ENCODE measurements at regions of chr2 and their contacts with region 1.

Region 1: GRCh38 chr2:219177552-219178376 is at the start of gene RETREG2:
- DNase-seq: peak; percentile 87 to 93
- ATAC-seq: peak; percentile 77 to 87 (median 80)
- H3K4me3 ChIP-seq: peak within 1 kb of the TSS; percentile 100
- H3K27ac ChIP-seq: peak within 1 kb of the TSS; percentile 87
- H3K4me1 ChIP-seq: peaks cover 31% of the 10 kb centered on the region
- H3K27me3 ChIP-seq: no peaks in the 10 kb centered on the region
- CTCF ChIP-seq: peak; percentile 44
- total RNA-seq, gene RETREG2: 28.1 to 38.1 (median 37.1) TPM

Region 2: DNA sequence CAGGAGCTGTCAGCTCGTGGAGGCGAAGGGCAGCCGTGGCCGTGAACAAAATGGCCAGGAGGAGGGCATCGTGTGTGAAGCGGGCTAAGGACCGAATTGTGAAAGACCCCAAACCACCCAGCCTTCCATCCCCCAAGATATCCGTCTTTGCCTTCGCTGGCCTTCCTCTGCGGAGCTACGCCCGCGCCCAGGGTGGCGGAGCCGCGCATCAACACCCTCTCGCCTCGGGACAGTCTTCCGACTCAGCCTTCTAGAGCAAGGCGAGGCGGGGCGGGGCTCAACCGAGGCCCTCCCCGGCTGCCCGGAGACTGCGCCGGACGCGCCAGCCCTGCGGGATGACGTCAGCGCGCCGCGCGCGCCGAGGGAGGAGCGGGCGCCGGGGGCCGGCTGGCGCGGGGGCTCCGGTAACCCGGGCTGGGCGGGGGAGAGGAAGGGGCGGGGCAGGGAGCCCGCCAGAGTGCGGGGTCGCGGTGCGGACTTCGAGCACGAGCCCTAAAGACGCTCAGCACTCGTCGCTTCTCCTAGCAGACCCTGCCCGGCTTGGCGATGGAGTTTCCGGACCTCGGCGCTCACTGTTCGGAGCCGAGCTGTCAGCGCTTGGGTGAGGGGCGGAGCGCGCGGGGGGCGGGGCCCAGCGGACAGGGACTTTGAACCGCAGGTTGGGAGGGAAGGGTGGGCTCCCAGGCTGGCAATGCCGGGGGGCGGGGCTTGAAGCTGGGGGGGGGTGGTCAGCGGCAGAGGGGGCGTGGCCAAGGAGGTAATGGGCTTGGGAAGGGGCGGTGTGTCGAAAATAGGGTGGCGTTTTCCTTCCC is 28.9 kb after region 1 on chr2 and contains the start of gene ZFAND2B:
- intact Hi-C with region 1: loop called in 1 of 2 experiments (anchors 1 kb)
- DNase-seq: peak; percentile 95 to 97
- ATAC-seq: peak; percentile 97 to 98 (median 98)
- H3K4me3 ChIP-seq: peak within 1 kb of the TSS; percentile 75
- H3K27ac ChIP-seq: peak within 1 kb of the TSS; percentile 91
- H3K4me1 ChIP-seq: peaks cover 15% of the 10 kb centered on the region
- H3K27me3 ChIP-seq: no peaks in the 10 kb centered on the region
- CTCF ChIP-seq: peak; percentile 9
- total RNA-seq, gene ZFAND2B: 19.0 to 26.6 (median 22.1) TPM

Region 3: GRCh38 chr2:219218732-219219701 is 41.3 kb after region 1 on chr2 and contains the start of gene ABCB6:
- intact Hi-C with region 1: loop called in 1 of 2 experiments (anchors 5 kb)
- DNase-seq: peak; percentile 99
- ATAC-seq: peak; percentile 87 to 88 (median 87)
- H3K4me3 ChIP-seq: peak within 1 kb of the TSS; percentile 69
- H3K27ac ChIP-seq: peak within 1 kb of the TSS; percentile 92
- H3K4me1 ChIP-seq: peaks cover 24% of the 10 kb centered on the region
- H3K27me3 ChIP-seq: no peaks in the 10 kb centered on the region
- CTCF ChIP-seq: no peak
- total RNA-seq, gene ABCB6: 24.4 to 55.7 (median 43.5) TPM

Region 4: DNA sequence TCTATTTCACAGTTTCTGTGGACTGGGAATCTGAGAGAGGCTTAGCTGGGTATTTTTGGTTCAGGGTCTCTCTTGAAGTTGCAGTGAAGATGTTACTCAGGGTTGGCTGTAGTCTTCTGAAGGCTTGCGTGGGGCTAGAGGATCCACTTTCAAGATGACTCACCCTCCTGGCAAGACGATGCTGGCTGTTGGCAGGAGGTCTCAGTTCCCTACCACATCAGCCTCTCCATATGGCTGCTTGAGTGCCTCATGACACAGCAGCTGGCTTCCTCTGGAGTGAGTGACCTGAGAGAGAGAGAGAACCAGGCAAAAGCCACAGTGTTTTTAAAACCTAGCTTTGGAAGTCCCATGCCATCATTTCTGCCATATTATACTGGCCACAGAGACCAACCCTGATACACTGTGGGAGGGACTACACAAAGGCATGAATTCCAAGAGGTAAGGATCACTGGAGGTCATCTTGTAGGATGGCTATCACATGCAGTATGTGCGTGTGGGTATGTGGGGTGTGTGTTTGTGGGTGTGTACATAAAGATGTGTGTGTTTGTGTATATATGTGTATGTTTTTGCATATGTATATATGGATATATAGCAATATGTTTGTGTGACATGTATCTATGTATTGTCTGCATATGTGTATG is 184.9 kb after region 1 on chr2:
- intact Hi-C with region 1: loop called in 1 of 2 experiments (anchors 10 kb)
- DNase-seq: peak; percentile 78 to 90
- ATAC-seq: peak; percentile 97 to 99 (median 98)
- H3K4me3 ChIP-seq: no peak overlapping the region
- H3K27ac ChIP-seq: peak overlapping the region; percentile 76
- H3K4me1 ChIP-seq: peaks cover 25% of the 10 kb centered on the region
- H3K27me3 ChIP-seq: peaks cover 0 to 13% (median 5%) of the 10 kb centered on the region in 3 donors
- CTCF ChIP-seq: no peak

Region 5: GRCh38 chr2:219543601-219544358 is 366.0 kb after region 1 on chr2 and contains the starts of genes CHPF and TMEM198:
- intact Hi-C with region 1: loop called in 1 of 2 experiments (anchors 10 kb)
- DNase-seq: peak; percentile 98 to 99
- ATAC-seq: peak; percentile 91 to 93 (median 92)
- H3K4me3 ChIP-seq: peak within 1 kb of the TSS; percentile 79
- H3K27ac ChIP-seq: peak within 1 kb of the TSS; percentile 94
- H3K4me1 ChIP-seq: peaks cover 23% of the 10 kb centered on the region
- H3K27me3 ChIP-seq: no peaks in the 10 kb centered on the region
- CTCF ChIP-seq: no peak
- total RNA-seq, gene CHPF: 11.9 to 14.2 (median 13.1) TPM
- total RNA-seq, gene TMEM198: 0.88 to 3.1 (median 2.0) TPM

Measured in psoas muscle (tissue), 8 donors.